GM18951 (cell line): ENCODE measurements at regions of chr3 and their contacts with region 1.

Region 1: GRCh38 chr3:46926871-46927717 is 49.5 kb downstream of the CCDC12 start:
- POLR2A ChIP-seq: peak; percentile 49

Region 2: GRCh38 chr3:46990573-46991374 is 63.7 kb after region 1 on chr3:
- in situ Hi-C with region 1: loop called (anchors 5 kb)
- POLR2A ChIP-seq: no peak